OCI-LY7 (cell line): ENCODE measurements at regions of chr11 and their contacts with region 1.

Region 1: DNA sequence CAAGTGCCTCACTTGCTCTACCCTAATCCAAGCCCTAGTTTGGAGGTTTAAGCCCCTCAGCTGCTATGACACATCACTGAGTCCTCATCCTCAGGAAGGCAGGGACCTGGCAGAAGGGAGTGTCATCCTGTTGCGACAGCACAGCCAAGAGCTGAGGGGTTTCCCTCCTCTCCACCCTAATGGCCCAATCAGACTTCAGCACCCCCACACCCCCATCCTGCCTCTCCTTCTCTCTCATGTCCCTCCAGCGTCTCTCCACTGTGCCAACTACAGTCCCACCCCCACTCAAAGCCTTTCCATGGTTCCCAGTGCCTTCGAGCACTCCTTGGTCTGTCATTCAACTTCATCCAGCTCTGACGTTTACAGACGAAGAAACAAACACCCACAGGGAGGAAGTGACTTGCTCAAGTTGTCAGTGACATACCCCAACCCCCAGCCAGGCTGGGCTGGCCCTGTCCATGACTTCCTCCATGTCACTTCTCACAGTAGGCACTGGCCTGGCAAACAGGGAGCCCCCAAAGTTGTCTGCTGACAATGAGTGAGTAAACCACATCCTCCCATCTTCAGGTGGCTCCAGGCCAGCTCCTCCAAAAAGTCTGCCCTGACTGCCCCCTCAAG is 15.6 kb downstream of the ARAP1 start:
- DNase-seq: peak; percentile 69
- H3K4me3 ChIP-seq: peak overlapping the region; percentile 34
- H3K27ac ChIP-seq: peak overlapping the region; percentile 63
- H3K4me1 ChIP-seq: peaks cover 56% of the 10 kb centered on the region
- CTCF ChIP-seq: no peak

Region 2: DNA sequence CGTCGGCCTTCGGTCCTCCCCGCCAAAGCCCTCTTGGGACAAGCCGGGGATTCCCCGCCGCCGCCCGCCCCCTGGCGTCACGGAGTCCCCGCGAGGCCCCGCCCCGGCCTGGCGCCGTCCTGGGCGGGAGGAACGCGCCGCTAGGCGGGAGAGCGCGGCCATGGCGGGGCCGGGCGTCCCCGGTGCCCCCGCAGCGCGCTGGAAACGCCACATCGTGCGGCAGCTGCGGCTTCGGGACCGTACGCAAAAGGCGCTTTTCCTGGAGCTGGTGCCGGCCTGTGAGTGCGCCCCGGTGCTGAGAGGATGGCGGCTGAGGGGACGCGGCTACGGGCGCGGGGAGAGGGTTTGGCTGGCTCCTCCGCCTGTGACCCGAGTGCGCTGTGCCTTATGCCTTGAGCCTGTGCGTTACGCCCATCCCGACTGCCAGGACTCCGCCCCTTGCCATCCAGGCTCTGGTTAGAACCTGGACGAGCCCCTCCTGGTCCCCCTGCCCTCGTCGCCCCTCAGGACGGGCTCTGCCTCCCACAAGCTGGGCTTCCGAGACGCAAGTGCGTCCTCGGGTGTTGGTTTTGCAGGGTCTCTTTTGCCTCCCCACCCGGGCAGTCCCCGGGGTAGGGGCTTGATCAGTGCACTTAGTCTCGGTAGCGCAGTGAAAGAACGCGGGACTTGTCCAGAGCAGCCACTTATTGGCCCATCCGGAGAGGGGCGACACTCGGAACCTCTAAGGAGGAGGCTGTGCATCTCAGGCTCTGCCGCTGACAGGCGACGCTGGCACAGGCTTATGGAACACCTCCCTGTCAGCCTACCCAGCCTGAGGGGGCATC is 77.9 kb after region 1 on chr11 and contains the start of gene ATG16L2:
- CTCF ChIA-PET with region 1: no interaction called
- POLR2A ChIA-PET with region 1: interaction called, 3 read pairs
- intact Hi-C with region 1: loop called (anchors 2 kb)
- DNase-seq: peak; percentile 91
- H3K4me3 ChIP-seq: peak within 1 kb of the TSS; percentile 84
- H3K27ac ChIP-seq: peak within 1 kb of the TSS; percentile 91
- H3K4me1 ChIP-seq: peaks cover 27% of the 10 kb centered on the region
- CTCF ChIP-seq: peak; percentile 60
- total RNA-seq, gene ATG16L2: 99.1 and 103 TPM in 2 replicates

Region 3: GRCh38 chr11:73157053-73158010 is 420.8 kb after region 1 on chr11:
- CTCF ChIA-PET with region 1: no interaction called
- POLR2A ChIA-PET with region 1: no interaction called
- intact Hi-C with region 1: loop called (anchors 5 kb)
- DNase-seq: peak; percentile 77
- H3K4me3 ChIP-seq: peak overlapping the region; percentile 41
- H3K27ac ChIP-seq: peak overlapping the region; percentile 98
- H3K4me1 ChIP-seq: peaks cover 85% of the 10 kb centered on the region
- CTCF ChIP-seq: no peak